GM10248 (cell line): ENCODE measurements at regions of chr5 and their contacts with region 1.

Region 1: GRCh38 chr5:137888857-137889759 is at the start of gene PKD2L2:
- DNase-seq: peak; percentile 86
- CTCF ChIP-seq: peak; percentile 46

Region 2: GRCh38 chr5:137136991-137137632 is 752.0 kb before region 1 on chr5:
- CTCF ChIA-PET with region 1: no interaction called
- POLR2A ChIA-PET with region 1: no interaction called
- DNase-seq: no peak
- CTCF ChIP-seq: no peak

Region 3: DNA sequence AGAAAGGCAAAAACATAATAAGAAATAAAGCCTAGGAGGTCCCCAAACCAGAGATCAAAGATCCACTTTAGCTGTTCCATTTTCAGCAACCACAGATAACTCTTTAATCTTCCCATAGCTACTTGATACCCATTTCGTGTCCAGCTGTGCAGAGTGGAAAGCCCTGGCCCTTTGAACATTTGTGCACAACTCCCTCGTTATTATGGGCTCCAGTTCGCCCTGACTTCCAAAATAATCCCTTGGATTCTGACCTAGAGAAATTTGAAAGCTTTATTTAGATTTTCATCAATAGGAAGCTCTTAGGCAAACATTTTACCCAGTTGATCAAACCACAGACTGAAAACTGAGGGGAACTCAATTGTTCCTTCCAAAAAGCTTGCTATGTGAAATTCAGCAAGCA is 16.6 kb before region 1 on chr5:
- CTCF ChIA-PET with region 1: interaction called, 21 read pairs
- POLR2A ChIA-PET with region 1: no interaction called
- DNase-seq: no peak
- CTCF ChIP-seq: no peak

Region 4: DNA sequence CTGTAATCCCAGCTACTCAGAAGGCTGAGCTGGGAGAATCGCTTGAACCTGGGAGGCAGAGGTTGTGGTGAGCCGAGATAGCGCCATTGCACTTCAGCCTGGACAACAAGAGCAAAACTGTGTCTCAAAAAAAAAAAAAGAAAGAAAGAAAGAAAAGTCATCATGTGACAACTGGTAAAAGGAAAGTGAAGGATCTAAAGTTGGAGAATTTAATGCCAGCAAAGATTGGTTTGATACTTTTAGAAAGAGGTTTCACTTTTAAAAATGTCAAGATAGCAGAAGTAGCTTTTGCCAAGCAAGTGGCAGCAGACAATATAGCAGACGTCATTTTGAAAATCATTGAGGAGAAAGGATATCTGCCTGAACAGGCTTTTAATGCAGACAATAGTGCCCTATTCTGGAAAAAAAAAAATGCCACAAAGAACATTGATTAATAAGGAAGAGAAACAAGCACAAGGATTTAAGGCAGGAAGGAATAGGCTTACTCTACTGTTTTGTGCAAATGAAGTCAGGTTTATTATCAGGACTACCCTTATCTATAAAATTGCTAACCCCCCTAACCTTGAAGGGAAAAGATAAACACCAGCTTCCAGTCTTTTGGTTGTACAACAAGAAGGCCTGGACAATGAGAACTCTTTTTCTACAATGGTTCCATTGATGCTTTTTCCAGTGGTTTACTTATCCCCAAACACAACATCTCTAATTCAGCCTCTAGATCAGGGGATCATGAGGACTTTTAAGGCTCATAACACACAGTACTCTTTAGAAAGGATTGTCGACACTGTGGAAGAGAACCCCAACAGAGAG is 12.1 kb after region 1 on chr5:
- CTCF ChIA-PET with region 1: interaction called, 16 read pairs
- POLR2A ChIA-PET with region 1: interaction called, 3 read pairs
- DNase-seq: no peak
- CTCF ChIP-seq: no peak